Aorta (tissue), 5 donors: ENCODE measurements at regions of chrX and their contacts with region 1.

Region 1: GRCh38 chrX:133670383-133670782 is 255.1 kb upstream of the GPC4 start:
- DNase-seq: no peak
- ATAC-seq: peak; percentile 62
- H3K4me3 ChIP-seq: no peak overlapping the region
- H3K27ac ChIP-seq: no peak overlapping the region
- H3K4me1 ChIP-seq: no peaks in the 10 kb centered on the region
- H3K27me3 ChIP-seq: no peaks in the 10 kb centered on the region

Region 2: GRCh38 chrX:132968296-132968949 is 702.0 kb before region 1 on chrX:
- intact Hi-C with region 1: loop called in 1 of 2 experiments (anchors 10 kb)
- DNase-seq: no peak
- ATAC-seq: no peak
- H3K4me3 ChIP-seq: no peak overlapping the region
- H3K27ac ChIP-seq: no peak overlapping the region
- H3K4me1 ChIP-seq: no peaks in the 10 kb centered on the region
- H3K27me3 ChIP-seq: no peaks in the 10 kb centered on the region

Region 3: DNA sequence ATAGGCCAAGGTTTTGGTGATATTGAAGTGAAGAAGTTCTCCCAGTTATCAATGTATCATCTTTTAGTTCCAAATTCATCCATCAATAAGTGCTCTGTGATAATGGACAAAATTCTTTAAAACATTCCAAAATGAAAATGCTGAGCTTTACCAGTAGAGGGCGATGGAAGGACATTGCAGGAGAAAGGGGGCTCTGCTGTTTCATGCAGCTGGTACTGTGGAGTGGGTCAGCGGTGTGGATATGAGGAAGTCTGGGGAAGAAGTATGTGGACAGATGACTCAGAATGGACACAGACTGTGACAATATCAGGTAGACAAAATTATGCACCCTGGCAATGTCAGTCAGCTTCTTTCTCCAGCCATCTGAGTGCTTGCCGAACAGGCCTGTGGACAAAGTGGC is 665.3 kb before region 1 on chrX:
- intact Hi-C with region 1: loop called in 1 of 2 experiments (anchors 10 kb)
- DNase-seq: no peak
- ATAC-seq: no peak
- H3K4me3 ChIP-seq: no peak overlapping the region
- H3K27ac ChIP-seq: no peak overlapping the region
- H3K4me1 ChIP-seq: no peaks in the 10 kb centered on the region
- H3K27me3 ChIP-seq: no peaks in the 10 kb centered on the region

Region 4: DNA sequence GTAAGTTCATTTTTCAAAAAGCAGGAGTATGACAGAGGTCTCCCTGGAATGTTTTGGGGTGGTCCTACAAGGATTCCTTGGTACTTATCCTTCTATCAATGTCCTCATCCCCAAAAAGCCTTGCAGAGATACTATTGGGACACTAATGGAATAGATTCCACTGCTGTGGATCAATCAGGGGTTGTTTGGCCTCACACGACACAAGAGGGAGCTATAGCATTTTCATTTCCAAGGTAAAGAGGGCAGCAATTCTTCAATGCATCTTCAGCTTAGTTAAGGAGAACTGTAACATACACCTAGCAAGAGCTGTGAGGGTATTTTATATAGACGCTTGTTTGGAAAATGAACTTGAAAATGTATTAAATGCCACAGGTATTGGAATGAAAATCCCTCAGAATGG is 624.4 kb before region 1 on chrX:
- intact Hi-C with region 1: loop called in 1 of 2 experiments (anchors 10 kb)
- DNase-seq: no peak
- ATAC-seq: no peak
- H3K4me3 ChIP-seq: no peak overlapping the region
- H3K27ac ChIP-seq: no peak overlapping the region
- H3K4me1 ChIP-seq: no peaks in the 10 kb centered on the region
- H3K27me3 ChIP-seq: no peaks in the 10 kb centered on the region

Region 5: GRCh38 chrX:133847340-133847994 is 177.1 kb after region 1 on chrX:
- intact Hi-C with region 1: no loop called
- DNase-seq: no peak
- ATAC-seq: no peak
- H3K4me3 ChIP-seq: peak overlapping the region in 1 of 2 donors; percentile 20
- H3K27ac ChIP-seq: no peak overlapping the region
- H3K4me1 ChIP-seq: no peaks in the 10 kb centered on the region
- H3K27me3 ChIP-seq: no peaks in the 10 kb centered on the region